ENCODE measurements at regions of chr4 and their contacts with region 1.

Region 1: GRCh38 chr4:8252301-8253173 is 17.0 kb upstream of the HTRA3 start:
- DNase-seq: no peak
- H3K4me3 ChIP-seq: no peak overlapping the region
- CTCF ChIP-seq: no peak

Region 2: GRCh38 chr4:8409264-8410065 is 156.9 kb after region 1 on chr4:
- in situ Hi-C with region 1: loop called (anchors 5 kb)
- DNase-seq: no peak
- H3K4me3 ChIP-seq: no peak overlapping the region
- CTCF ChIP-seq: no peak